Ovary (tissue), 10 donors: ENCODE measurements at regions of chr14 and their contacts with region 1.

Region 1: DNA sequence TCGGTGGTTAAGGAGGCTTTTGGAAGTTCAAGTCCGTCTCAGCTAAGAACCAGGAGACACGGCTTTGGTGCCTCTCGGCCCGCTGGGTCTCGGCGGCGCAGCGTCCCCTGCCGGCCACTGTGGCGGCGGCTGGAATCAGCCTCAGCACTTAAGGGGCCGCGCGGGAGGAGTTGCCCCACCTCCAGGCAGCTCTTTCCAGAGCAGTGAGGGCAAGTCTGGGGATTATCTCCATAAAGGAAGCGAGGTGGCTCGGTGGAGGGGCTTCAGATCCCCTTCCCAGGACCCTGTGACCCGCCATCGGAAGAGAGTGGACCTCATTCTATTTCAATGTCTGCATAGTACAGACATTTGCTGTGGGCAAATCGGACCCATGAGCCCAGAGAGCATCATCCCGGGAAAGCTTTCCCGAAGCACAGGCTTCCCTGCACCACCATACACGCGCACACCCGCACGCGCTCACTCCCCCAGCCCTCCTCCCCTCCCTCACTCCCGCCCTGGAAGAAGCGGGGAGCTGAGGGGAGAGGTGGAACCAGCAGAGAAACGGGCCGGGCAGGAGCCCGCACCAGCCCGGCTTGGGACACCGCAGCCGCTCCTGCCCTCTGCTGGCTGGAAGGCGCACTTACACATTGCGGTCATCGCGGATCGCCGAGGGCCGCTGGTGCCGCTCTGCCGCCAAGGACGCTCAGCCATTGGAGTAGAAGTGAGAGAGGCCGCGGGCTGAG is 15.9 kb downstream of the RNASE2 start:
- DNase-seq: peak; percentile 80 to 92 (median 86)
- H3K4me3 ChIP-seq: peak overlapping the region; percentile 58
- H3K27ac ChIP-seq: peak overlapping the region; percentile 74 to 86
- H3K4me1 ChIP-seq: no peaks in the 10 kb centered on the region
- H3K27me3 ChIP-seq: no peaks in the 10 kb centered on the region
- CTCF ChIP-seq: peak; percentile 83 to 87 (median 83)
- EP300 ChIP-seq: no peak
- POLR2A ChIP-seq: no peak

Region 2: DNA sequence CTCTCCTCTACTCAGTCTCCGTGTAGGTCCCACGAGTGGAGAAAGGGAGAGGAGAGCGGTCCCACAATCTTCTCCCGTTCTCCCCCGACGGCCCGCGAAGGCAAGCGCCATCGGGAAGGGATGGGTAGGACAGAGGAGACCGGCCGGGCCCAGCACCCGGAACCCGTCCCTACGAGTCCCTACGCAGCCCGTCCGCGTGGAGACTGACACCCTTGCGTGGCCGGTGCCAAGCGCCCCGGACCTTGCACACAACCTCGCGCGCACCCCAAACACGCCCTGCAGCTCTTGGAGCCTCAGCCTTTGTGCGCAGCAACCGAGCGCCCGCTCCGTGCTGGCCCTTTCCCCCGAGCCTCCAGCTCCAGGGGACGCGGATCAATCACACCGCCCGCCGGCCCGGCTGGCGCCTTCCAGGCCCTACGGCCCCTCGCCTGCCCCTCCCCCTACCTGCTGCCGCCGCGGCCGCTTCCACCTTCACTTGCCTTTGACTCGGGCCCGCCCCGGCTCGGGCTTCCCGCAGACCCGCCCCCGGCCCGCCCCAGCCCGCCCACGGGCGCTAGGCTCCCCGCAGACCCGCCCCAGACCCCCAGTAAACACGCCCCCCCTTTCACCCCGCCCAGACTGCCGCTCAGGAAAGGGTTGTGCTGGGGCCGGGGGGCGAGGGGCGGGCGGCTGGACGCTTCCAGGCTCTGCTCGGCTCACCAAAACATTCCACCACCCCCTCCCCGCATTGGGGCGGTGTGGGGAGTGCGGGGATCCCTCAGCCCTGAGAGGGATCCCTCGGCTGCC is 53.6 kb after region 1 on chr14 and contains the start of gene NDRG2:
- intact Hi-C with region 1: loop called in 1 of 4 experiments (anchors 10 kb)
- DNase-seq: peak; percentile 86 to 93 (median 88)
- H3K4me3 ChIP-seq: peak within 1 kb of the TSS; percentile 93
- H3K27ac ChIP-seq: peak within 1 kb of the TSS; percentile 90 to 97
- H3K4me1 ChIP-seq: peaks cover 9% of the 10 kb centered on the region
- H3K27me3 ChIP-seq: no peaks in the 10 kb centered on the region
- CTCF ChIP-seq: no peak
- EP300 ChIP-seq: no peak
- POLR2A ChIP-seq: no peak
- total RNA-seq, gene NDRG2: 355 to 703 (median 417) TPM